AG04449 (cell line): ENCODE measurements at regions of chr19 and their contacts with region 1.

Region 1: DNA sequence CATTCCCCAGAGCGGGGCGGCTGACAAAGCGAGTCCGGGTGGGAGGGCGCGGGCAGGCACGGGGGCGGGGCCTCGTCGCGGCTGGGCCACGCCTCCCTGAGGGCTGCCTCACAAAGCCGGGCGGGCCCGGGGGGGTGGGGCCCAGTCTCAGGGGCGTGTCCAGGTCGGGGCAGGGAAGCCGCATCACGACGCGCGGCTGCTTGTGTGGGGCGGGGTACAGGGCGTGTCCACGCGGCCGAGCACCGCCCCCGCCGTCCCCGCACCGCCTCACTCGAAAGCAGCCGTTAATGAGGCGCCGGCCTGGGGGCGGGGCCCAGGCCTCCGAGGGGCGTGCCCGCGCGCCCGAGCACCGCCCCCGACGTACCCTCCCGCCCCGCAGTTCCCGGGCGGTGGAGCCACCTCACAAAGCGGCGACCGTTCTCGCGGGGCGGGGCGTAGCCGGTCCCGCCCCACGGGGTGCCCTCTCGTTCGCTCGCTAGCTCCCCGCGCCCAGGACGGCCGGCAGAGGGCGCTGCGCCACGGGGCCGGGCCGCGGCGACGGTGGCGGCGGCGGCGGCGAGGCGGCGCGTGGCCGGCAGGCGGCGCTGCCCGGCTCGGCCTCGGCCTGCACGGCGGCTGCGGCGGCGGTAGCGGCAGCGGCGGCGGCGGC is at the start of gene CARM1:
- DNase-seq: peak; percentile 76
- H3K4me3 ChIP-seq: peak within 1 kb of the TSS; percentile 78
- CTCF ChIP-seq: peak; percentile 81

Region 2: DNA sequence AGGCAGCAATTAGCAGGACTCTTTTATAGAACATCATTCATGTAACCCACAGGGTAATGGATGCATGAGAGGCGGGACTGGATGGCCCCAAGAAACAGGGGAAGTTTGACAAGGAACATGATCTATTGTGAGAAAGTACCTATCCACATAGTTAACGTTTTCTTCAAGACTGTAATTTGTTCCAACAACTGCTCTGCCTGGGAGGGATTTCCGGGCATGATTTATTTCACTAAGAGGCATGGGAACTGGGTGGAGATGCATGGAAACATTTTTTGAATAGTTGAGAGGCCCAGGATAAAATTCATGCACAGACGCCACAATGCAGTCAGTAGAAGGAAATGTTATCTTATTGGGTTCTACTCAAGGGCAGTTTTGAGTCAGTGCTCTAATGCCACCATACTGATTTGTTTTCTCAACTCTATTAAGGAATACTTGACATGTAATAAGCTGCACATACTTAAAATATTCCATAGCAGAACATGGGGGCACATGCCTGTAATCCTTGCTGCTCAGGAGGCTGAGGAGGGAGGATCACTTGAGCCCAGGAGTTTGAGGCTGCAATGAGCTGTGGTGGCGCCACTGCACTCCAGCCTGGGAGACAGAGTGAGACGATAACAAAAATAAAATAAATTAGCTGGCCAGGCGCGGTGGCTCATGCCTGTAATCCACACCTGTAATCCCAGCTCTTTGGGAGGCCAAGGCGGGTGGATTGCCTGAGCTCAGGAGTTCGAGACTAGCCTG is 337.3 kb before region 1 on chr19:
- CTCF ChIA-PET with region 1: no interaction called
- POLR2A ChIA-PET with region 1: no interaction called
- DNase-seq: peak; percentile 94
- H3K4me3 ChIP-seq: no peak overlapping the region
- CTCF ChIP-seq: no peak

Region 3: GRCh38 chr19:10789866-10790265 is 81.2 kb before region 1 on chr19:
- CTCF ChIA-PET with region 1: no interaction called
- POLR2A ChIA-PET with region 1: no interaction called
- DNase-seq: no peak
- H3K4me3 ChIP-seq: no peak overlapping the region
- CTCF ChIP-seq: no peak

Region 4: GRCh38 chr19:10835754-10836477 is 35.2 kb before region 1 on chr19 and contains the start of gene TMED1:
- CTCF ChIA-PET with region 1: interaction called, 559 read pairs
- POLR2A ChIA-PET with region 1: interaction called, 4 read pairs
- DNase-seq: peak; percentile 92
- H3K4me3 ChIP-seq: peak within 1 kb of the TSS; percentile 79
- CTCF ChIP-seq: peak; percentile 24

Region 5: DNA sequence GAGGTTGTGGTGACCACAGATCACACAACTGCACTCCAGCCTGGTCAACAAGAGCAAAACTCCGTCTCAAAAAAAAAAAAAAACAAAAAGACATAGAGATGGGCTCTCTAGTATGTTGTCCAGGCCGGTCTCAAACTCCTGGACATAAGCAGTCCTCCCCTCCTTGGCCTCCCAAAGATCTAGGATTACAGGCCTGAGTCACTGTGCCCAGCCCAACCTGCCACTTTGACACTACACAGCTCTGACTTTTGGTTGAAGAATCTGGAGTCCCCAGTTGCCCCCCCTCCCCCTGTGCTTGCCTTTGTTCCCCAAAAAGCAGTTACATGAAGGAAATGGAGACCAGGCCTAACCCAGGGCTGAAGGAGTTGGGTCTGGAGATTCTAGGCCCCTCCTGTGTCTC is 13.2 kb after region 1 on chr19:
- CTCF ChIA-PET with region 1: interaction called, 111 read pairs
- POLR2A ChIA-PET with region 1: interaction called, 3 read pairs
- DNase-seq: no peak
- H3K4me3 ChIP-seq: no peak overlapping the region
- CTCF ChIP-seq: no peak

Region 6: DNA sequence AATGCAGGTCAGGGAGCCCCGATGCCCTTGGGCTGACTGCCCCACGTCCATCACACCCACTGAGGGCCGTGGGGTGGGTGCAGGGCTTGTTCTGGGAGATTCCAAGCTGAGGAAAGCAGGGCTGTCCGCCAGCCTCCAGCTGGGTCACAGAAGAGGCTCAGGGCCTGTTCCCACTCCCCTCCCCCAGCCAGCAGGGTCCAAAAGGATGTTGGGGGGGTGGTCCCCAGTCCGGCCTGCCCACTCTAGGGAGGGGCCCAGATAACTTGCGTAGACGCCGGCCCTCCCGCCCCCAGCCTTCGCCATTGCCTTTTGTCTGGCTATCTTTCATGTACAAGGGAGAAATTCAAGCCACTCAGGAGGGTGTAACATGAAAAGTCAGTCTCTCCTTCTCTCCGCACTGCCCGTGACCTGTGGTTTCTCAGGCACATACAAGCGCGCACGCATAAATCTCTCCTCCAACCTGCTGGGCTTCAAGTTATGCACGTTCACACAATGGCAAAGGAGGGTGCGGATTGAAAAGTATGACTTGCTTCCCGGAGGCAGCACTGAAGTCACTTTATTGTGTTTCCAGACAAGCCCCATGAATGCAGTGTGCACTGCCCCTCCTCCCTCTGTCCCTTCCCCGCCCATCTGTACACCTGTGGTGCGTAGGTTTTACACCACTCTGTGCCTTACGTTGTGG is 20.5 kb after region 1 on chr19:
- CTCF ChIA-PET with region 1: interaction called, 111 read pairs
- POLR2A ChIA-PET with region 1: interaction called, 3 read pairs
- DNase-seq: no peak
- H3K4me3 ChIP-seq: no peak overlapping the region
- CTCF ChIP-seq: no peak

Region 7: DNA sequence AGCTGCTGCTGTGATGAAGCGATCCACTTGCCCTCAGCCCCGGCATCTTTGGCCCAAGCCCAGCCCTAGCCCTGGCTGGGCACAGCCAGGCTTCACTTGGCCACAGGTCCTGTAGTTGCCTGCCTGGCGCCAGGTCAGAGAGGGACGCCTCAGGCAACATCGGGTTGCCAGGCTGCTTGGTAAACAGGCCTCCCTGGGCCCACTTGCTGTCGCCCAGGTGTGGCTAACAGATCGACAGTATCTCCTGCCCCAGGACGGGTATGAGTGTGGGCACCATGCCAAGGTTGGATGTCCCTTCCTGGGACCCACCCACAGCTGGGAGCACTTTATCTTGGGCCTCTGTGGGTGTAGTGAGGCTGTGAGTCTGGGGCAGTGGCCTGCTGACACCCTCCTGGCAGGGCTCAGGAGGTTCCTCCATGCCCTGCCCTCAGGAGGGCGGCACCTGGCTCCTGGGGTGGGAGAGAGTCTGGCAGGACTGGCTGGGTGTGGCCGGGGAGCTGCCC is 28.1 kb after region 1 on chr19:
- CTCF ChIA-PET with region 1: interaction called, 17 read pairs
- POLR2A ChIA-PET with region 1: no interaction called
- DNase-seq: no peak
- H3K4me3 ChIP-seq: no peak overlapping the region
- CTCF ChIP-seq: no peak

Region 8: DNA sequence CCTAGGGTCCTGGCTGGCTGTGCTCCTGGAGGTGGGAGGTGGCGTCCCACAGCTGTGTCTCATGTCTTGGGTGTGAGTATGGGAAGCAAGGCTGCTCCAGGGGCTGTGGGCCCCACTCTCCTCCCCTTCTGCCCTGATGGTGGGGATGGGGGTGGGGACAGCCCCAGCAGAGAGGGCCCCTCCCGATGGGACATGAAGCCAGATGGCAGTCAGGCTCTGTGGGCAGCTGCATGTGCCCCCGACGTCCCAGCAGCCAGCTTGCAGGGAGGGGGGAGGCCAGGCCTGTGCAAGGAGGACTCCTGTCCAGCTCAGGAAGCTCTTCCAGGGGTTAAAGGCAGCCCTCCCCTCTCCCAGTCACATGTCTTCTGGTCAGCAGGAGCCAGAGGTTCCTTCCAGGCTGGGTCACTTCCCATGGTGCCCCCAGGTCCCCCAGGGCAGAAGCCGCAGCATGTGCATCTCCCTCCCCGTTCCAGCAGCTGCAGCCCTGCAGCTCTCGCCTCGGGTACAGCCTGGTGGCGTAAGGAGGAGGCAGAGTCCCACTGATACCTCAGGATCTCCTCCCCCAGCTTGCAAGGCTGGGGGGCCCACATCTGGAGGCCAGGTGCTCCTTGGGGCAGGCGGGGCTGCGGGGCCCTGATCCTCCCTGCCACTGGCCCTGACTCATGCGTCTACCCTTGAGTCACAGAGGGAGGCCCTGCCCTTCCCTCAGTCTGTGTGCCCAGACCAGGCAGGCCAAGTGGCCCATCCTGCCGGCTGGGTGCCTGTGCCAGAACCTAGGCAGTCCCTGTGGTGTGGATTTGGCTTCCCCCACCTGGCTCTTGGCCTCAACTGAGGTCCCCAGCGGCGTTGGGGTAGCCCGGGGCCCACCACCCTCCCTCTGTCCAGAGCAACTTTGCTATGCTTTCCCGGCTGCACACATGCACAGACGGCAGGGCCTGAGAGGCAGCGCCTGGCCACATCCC is 44.3 kb after region 1 on chr19:
- CTCF ChIA-PET with region 1: interaction called, 13 read pairs
- POLR2A ChIA-PET with region 1: no interaction called
- DNase-seq: peak; percentile 23
- H3K4me3 ChIP-seq: no peak overlapping the region
- CTCF ChIP-seq: peak; percentile 44